SK-N-SH (cell line): ENCODE measurements at regions of chr2 and their contacts with region 1.

Region 1: DNA sequence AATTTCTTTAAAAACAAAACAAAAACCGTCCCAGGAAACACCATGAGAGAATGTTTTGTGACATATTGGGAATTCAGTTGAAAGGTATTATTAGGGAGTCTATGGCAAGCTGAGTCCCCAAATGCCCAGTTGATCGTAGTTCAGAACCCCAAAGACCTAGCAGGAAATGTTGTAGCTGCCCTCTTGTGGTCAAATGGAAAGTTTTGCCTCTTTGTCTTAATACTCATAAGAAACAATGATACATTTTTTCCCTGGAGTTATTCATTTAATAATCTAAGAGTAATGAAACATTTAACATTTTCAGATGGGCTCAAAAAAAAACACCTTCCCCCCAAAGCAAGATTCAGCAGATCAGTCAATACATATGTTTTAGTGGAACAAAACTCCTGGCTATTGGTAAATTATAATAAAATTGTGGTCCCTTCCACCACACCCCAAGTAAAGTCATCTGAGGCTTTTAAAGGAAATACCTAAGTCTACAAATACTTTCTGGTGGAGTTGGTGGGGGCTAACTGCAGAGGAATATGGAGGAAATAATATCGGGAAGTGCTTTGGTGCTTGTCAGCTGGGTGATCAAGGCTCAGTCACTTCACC is 37.8 kb upstream of the EFEMP1 start:
- DNase-seq: peak; percentile 17
- H3K4me3 ChIP-seq: 0 out of 4 replicates have a peak overlapping the region, but pooled peaks of 1 of the 2 experiments have one; percentile 1
- H3K27ac ChIP-seq: peak overlapping the region in 1 of 2 experiments; percentile 32; a peak in 1 of 4 replicates
- H3K4me1 ChIP-seq: peaks cover 0 to 12% of the 10 kb centered on the region in 2 experiments; a peak in 1 of 4 replicates
- H3K27me3 ChIP-seq: no peaks in the 10 kb centered on the region
- CTCF ChIP-seq: peak; percentile 82
- EP300 ChIP-seq: no peak
- RAD21 ChIP-seq: peak; percentile 66

Region 2: DNA sequence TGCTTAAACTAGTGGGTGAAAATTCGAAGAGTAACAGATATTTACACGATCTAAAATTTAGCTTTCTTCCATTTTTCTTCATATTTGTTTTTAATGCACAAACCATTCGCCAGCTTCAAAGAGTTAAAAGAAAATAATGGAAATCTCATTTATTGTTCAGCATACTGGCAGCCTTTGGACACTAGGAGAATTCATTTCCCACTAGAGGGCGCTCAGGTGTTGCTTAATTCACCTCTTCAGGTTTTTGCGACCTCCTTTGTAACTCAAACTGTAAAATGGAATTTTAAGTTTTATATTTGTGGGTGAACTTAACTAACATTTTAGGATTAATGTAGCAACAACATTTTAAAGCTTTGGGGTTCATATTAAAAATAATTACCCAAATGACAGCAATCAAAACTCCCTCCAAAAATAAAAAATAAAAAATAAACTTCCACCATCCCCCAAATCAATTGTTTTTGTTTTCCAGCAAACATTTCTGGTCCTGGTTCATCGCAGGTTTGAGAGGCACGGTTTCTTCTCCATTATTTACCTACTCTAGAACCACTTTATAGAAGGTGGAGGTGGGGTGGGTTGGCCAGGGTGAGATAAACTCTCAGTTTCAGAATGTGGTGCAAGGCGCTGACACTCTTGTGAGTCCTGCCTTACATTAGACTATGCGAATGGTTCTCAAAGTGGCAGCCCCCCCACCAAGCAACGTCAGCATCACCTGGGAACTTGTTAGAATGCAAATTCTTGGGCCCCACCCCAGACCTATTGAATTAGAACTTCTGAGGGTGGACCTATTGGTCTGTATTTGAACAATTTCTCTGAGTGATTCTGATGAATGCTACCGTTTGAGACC is 243.0 kb before region 1 on chr2:
- CTCF ChIA-PET with region 1: interaction called, 23 read pairs
- POLR2A ChIA-PET with region 1: no interaction called
- DNase-seq: peak; percentile 56
- H3K4me3 ChIP-seq: no peak overlapping the region; a peak in 1 of 4 replicates
- H3K27ac ChIP-seq: no peak overlapping the region
- H3K4me1 ChIP-seq: peaks cover 3% of the 10 kb centered on the region in 2 experiments; a peak in 2 of 4 replicates
- H3K27me3 ChIP-seq: no peaks in the 10 kb centered on the region
- CTCF ChIP-seq: peak; percentile 92
- EP300 ChIP-seq: no peak
- RAD21 ChIP-seq: peak; percentile 91

Region 3: DNA sequence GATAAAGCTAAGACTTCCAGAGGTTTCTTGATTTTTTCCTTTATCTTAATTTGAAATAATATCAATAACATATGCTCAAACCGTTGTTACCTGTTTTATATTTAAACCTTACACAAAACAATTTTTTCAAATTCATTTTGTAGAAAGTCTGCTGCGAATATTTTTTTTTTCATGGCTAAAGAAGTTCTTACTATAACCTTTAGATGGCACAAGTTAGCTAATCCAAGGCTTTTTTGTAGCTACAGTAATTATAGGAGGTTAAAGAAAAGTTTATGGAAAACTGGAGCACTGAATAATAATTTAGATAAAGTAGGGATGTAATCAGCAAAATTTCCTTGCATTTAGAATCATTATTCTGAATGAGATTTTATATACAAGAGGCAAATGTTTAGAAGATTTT is 189.8 kb before region 1 on chr2:
- CTCF ChIA-PET with region 1: interaction called, 11 read pairs
- POLR2A ChIA-PET with region 1: no interaction called
- DNase-seq: peak; percentile 26
- H3K4me3 ChIP-seq: no peak overlapping the region
- H3K27ac ChIP-seq: 0 out of 4 replicates have a peak overlapping the region, but pooled peaks of 1 of the 2 experiments have one; percentile 6
- H3K4me1 ChIP-seq: no peaks in the 10 kb centered on the region; a peak in 1 of 4 replicates
- H3K27me3 ChIP-seq: no peaks in the 10 kb centered on the region
- CTCF ChIP-seq: peak; percentile 85
- EP300 ChIP-seq: no peak
- RAD21 ChIP-seq: peak; percentile 72

Region 4: GRCh38 chr2:55948176-55948921 is 13.1 kb before region 1 on chr2:
- CTCF ChIA-PET with region 1: interaction called, 10 read pairs
- POLR2A ChIA-PET with region 1: no interaction called
- DNase-seq: no peak
- H3K4me3 ChIP-seq: no peak overlapping the region
- H3K27ac ChIP-seq: no peak overlapping the region
- H3K4me1 ChIP-seq: no peaks in the 10 kb centered on the region
- H3K27me3 ChIP-seq: no peaks in the 10 kb centered on the region
- CTCF ChIP-seq: no peak
- EP300 ChIP-seq: no peak
- RAD21 ChIP-seq: no peak

Region 5: DNA sequence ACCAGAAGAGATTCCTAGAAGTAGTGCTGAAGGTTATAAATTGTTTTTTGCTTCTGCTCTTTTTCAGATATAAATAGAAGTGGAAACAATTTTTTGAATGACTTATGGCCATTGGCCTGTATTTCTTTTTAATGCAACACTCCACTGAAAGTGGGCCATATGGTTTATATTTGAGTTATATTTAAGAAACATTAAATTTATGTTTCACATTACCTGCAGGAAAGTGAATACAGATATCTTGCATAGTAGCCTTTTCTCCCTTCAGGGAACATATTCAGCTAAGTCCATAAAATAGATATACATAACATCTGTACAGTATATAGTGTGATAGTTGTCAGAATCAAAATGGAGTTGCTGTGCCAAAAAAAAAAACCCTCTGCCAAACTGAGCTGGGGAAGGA is 15.3 kb after region 1 on chr2:
- CTCF ChIA-PET with region 1: interaction called, 19 read pairs
- POLR2A ChIA-PET with region 1: no interaction called
- DNase-seq: no peak
- H3K4me3 ChIP-seq: no peak overlapping the region
- H3K27ac ChIP-seq: no peak overlapping the region; a peak in 1 of 4 replicates
- H3K4me1 ChIP-seq: no peaks in the 10 kb centered on the region
- H3K27me3 ChIP-seq: no peaks in the 10 kb centered on the region
- CTCF ChIP-seq: no peak
- EP300 ChIP-seq: no peak
- RAD21 ChIP-seq: no peak

Region 6: GRCh38 chr2:56055405-56055804 is 94.0 kb after region 1 on chr2:
- CTCF ChIA-PET with region 1: no interaction called
- POLR2A ChIA-PET with region 1: no interaction called
- DNase-seq: no peak
- H3K4me3 ChIP-seq: no peak overlapping the region
- H3K27ac ChIP-seq: peak overlapping the region in 1 of 2 experiments; percentile 19; a peak in 1 of 4 replicates
- H3K4me1 ChIP-seq: no peaks in the 10 kb centered on the region
- H3K27me3 ChIP-seq: no peaks in the 10 kb centered on the region
- CTCF ChIP-seq: no peak
- EP300 ChIP-seq: peak in 1 of 2 experiments; percentile 53; a peak in 1 of 4 replicates
- RAD21 ChIP-seq: no peak